ENCODE measurements at regions of chr10 and their contacts with region 1.

Region 1: DNA sequence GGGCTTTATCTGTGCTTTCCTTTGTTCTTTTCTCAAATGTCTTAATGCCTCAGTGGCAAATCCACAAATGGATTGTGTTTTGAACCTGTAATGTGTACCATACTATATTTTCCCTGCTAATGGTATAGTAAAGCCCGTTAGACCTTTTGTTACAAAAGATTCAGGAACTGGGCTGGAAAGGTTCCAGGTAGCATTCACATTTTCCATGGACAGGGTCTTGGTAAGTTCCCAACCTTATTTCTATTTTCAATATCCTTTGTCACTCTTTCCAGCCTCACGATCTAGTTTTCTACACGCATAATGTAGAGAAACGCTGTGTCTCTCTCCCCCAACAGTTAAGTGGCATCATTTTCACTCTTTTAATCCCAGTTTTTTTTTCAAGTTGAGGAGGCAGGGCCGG is 153.0 kb downstream of the PLCE1 start:
- DNase-seq: no peak
- H3K4me3 ChIP-seq: no peak overlapping the region
- H3K27ac ChIP-seq: peak overlapping the region; percentile 73
- H3K4me1 ChIP-seq: peaks cover 3 to 23% of the 10 kb centered on the region in 2 donors
- H3K27me3 ChIP-seq: no peaks in the 10 kb centered on the region
- CTCF ChIP-seq: no peak

Region 2: DNA sequence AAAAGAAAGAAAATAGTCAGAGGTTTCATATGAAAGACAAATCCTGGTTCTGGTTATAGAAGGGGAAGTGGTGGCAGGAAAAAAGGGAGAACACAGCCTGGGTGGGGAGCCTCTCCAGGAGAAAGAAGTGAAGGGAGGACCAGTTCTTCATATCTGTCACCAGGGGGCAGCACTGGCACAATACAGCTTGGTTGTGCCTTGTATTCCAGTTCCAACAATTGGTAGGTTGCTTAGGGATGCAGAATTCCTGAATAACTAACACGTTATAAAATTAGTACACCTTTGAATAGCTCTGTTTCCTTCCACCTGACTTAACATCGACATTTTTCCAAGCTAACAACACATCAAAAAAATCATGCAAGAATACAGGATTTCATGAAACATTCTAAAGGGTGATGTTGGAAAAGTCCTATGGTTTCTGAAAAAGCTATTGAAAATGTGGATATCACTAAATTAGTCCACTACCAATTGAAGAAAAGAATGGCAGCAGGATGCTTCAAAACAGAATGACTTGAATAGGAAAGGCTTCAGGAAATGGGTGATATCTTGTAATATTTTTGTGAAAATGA is 1020.2 kb before region 1 on chr10:
- intact Hi-C with region 1: no loop called
- DNase-seq: no peak
- H3K4me3 ChIP-seq: no peak overlapping the region
- H3K27ac ChIP-seq: no peak overlapping the region
- H3K4me1 ChIP-seq: no peaks in the 10 kb centered on the region
- H3K27me3 ChIP-seq: no peaks in the 10 kb centered on the region
- CTCF ChIP-seq: no peak

Region 3: DNA sequence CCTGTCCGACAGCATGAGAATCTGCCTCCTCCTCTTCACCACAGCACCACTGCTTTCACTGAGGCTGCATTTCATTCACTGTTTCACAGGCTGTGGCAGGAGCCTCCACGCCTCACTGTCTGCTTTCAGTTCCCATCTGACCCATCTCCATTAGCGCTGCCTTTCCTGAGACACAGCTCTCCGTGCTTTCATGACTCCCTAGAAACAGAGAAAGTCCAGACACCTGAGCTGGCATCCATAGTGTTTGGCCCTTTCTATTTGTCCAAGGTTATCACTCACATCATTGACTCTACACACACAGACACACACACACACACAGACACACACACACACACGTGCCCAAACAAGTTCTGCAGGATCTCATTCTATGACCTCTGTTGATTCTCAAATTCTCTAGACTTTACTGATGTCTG is 383.8 kb before region 1 on chr10:
- intact Hi-C with region 1: no loop called
- DNase-seq: no peak
- H3K4me3 ChIP-seq: no peak overlapping the region
- H3K27ac ChIP-seq: no peak overlapping the region
- H3K4me1 ChIP-seq: peaks cover 0 to 3% of the 10 kb centered on the region in 2 donors
- H3K27me3 ChIP-seq: no peaks in the 10 kb centered on the region
- CTCF ChIP-seq: no peak

Region 4: GRCh38 chr10:94194256-94194655 is 47.5 kb after region 1 on chr10:
- intact Hi-C with region 1: loop called (anchors 5 kb)
- DNase-seq: no peak
- H3K4me3 ChIP-seq: no peak overlapping the region
- H3K27ac ChIP-seq: peak overlapping the region in 1 of 2 donors; percentile 9
- H3K4me1 ChIP-seq: peaks cover 0 to 17% of the 10 kb centered on the region in 2 donors
- H3K27me3 ChIP-seq: no peaks in the 10 kb centered on the region
- CTCF ChIP-seq: no peak